Activated CD8-positive, alpha-beta T cell treated with anti-CD3 and anti-CD28 coated beads, Interleukin-2, amount 10 ng/mL, durations not matched to agents 7 days and 5 days (primary cell): ENCODE measurements at regions of chr14 and their contacts with region 1.

Region 1: GRCh38 chr14:21917699-21918436 is 244.2 kb upstream of the OR4E1 start:
- DNase-seq: peak; percentile 84
- ATAC-seq: peak; percentile 65
- H3K4me3 Mint-ChIP-seq: peak overlapping the region; percentile 78
- H3K27ac Mint-ChIP-seq: peak overlapping the region; percentile 81
- H3K4me1 Mint-ChIP-seq: peaks cover 73% of the 10 kb centered on the region
- H3K27me3 Mint-ChIP-seq: no peaks in the 10 kb centered on the region

Region 2: GRCh38 chr14:21326972-21327371 is 590.9 kb before region 1 on chr14:
- CTCF ChIA-PET with region 1: no interaction called
- POLR2A ChIA-PET with region 1: no interaction called
- DNase-seq: no peak
- ATAC-seq: no peak
- H3K4me3 Mint-ChIP-seq: no peak overlapping the region
- H3K27ac Mint-ChIP-seq: no peak overlapping the region
- H3K4me1 Mint-ChIP-seq: no peaks in the 10 kb centered on the region
- H3K27me3 Mint-ChIP-seq: peaks cover 12% of the 10 kb centered on the region

Region 3: GRCh38 chr14:21780429-21781084 is 137.3 kb before region 1 on chr14:
- CTCF ChIA-PET with region 1: no interaction called
- POLR2A ChIA-PET with region 1: no interaction called
- DNase-seq: no peak
- ATAC-seq: no peak
- H3K4me3 Mint-ChIP-seq: no peak overlapping the region
- H3K27ac Mint-ChIP-seq: no peak overlapping the region
- H3K4me1 Mint-ChIP-seq: peaks cover 3% of the 10 kb centered on the region
- H3K27me3 Mint-ChIP-seq: peaks cover 5% of the 10 kb centered on the region

Region 4: GRCh38 chr14:21894003-21894897 is 23.6 kb before region 1 on chr14:
- CTCF ChIA-PET with region 1: interaction called, 72 read pairs
- POLR2A ChIA-PET with region 1: no interaction called
- DNase-seq: peak; percentile 71
- ATAC-seq: peak; percentile 95
- H3K4me3 Mint-ChIP-seq: peak overlapping the region; percentile 73
- H3K27ac Mint-ChIP-seq: peak overlapping the region; percentile 85
- H3K4me1 Mint-ChIP-seq: peaks cover 10% of the 10 kb centered on the region
- H3K27me3 Mint-ChIP-seq: peaks cover 5% of the 10 kb centered on the region

Region 5: DNA sequence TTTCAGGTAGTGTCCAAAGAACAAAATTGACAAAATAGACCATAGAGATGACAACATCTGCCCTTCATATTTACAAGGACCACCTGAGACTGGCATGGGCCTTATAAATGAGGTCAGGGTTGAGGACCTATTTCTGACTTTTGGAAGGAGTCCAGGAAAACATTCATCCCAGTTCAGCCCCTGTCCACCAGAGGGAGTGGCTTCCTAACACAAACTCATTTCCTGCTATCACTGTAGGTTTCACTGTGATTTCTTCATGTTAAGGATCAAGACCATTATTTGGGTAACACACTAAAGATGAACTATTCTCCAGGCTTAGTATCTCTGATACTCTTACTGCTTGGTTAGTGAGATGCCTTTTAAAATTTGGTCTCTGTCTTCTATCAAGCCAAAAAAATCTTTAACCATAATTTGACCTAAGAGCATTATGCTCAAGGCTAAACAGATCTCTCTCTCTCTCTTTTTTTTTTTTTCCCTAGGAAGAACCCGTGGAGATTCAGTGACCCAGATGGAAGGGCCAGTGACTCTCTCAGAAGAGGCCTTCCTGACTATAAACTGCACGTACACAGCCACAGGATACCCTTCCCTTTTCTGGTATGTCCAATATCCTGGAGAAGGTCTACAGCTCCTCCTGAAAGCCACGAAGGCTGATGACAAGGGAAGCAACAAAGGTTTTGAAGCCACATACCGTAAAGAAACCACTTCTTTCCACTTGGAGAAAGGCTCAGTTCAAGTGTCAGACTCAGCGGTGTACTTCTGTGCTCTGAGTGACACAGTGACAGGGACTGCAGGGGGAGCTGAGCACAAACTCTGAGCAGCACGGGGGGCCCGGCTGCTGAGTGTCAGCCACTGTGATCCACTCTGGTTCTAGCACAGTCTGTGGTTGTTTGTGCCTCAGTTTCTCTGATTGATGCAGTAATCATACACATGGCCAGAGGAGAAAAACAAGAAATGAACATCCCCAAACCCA is 23.3 kb after region 1 on chr14:
- CTCF ChIA-PET with region 1: interaction called, 22 read pairs
- POLR2A ChIA-PET with region 1: interaction called, 3 read pairs
- DNase-seq: peak; percentile 50
- ATAC-seq: peak; percentile 84
- H3K4me3 Mint-ChIP-seq: peak overlapping the region; percentile 54
- H3K27ac Mint-ChIP-seq: peak overlapping the region; percentile 75
- H3K4me1 Mint-ChIP-seq: peaks cover 22% of the 10 kb centered on the region
- H3K27me3 Mint-ChIP-seq: peaks cover 26% of the 10 kb centered on the region

Region 6: GRCh38 chr14:21987937-21988336 is 70.1 kb after region 1 on chr14:
- CTCF ChIA-PET with region 1: interaction called, 16 read pairs
- POLR2A ChIA-PET with region 1: no interaction called
- DNase-seq: peak; percentile 35
- ATAC-seq: peak; percentile 39
- H3K4me3 Mint-ChIP-seq: no peak overlapping the region
- H3K27ac Mint-ChIP-seq: peak overlapping the region; percentile 66
- H3K4me1 Mint-ChIP-seq: peaks cover 32% of the 10 kb centered on the region
- H3K27me3 Mint-ChIP-seq: peaks cover 4% of the 10 kb centered on the region

Region 7: DNA sequence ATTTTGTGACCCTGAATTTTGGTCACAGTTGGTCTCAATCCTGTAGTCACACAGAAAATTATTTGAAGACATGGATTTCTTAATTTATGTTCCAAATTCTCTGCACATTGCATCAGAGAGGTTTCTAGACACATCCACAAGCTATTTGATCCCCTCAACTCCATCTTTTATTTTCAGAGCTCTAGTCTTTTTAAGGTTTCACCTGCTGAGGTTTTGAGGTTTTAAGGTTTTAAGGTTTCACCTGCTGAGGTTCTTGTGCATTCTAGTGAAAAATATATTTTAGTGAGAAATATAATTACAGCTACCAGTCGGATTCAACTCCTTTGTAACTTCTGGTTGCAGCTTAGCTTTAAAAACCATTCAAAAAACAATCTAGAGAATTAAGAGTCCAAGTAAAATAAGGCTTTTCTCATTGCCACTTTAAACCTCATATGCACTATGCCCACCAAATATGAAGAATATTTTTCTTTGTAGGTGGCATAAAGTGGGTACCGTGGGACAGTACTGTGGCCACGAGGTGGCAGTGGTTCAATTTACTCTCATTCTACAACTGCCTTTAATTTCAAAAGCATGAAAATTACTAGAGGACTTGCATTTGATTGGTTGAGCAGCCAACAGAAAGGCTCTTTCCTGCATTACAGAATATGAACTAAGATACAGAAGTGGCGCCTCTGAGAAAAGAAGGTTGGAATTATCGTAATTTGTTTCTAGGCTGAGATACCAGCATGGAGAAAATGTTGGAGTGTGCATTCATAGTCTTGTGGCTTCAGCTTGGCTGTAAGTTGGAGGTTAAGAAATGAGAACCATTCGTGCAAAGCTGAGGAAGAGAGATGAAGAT is 122.3 kb after region 1 on chr14:
- CTCF ChIA-PET with region 1: interaction called, 11 read pairs
- POLR2A ChIA-PET with region 1: no interaction called
- DNase-seq: peak; percentile 71
- ATAC-seq: peak; percentile 91
- H3K4me3 Mint-ChIP-seq: peak overlapping the region; percentile 76
- H3K27ac Mint-ChIP-seq: peak overlapping the region; percentile 81
- H3K4me1 Mint-ChIP-seq: peaks cover 19% of the 10 kb centered on the region
- H3K27me3 Mint-ChIP-seq: peaks cover 6% of the 10 kb centered on the region